Activated CD4-positive, alpha-beta T cell treated with anti-CD3 and anti-CD28 coated beads, Interleukin-2, amount 10 ng/mL, durations not matched to agents 7 days and 5 days (primary cell): ENCODE measurements at regions of chr9 and their contacts with region 1.

Region 1: DNA sequence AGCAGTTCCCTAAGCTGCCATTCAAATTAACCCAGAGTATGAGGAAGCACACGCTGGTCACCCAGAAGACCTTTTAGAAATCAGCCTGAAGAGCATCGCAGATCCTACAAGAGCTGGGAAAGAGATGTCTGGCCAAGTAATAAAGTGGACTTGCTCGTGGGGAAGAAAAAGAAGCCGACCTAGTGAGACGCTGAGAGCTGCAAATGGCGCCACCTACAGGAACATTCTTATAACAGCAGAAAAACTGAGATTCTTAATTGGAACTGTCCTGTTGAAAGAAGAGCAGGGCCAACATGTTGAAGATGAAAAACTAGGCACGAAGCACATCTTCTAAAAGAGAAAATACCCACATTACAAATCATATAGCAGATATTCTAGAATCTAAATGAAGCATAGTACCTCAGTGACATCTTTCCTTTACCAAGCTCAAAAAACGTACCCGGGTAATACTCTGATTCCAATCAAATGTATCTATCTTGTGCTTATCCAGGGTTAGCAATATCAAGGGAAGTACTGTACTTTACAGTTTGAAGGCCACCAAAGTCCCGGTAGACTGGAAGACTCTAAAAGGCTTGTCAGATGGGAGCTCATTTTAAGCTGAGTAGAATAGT is 3.9 kb upstream of the GNAQ start:
- DNase-seq: peak; percentile 71
- H3K4me3 Mint-ChIP-seq: peak overlapping the region; percentile 13
- H3K27ac Mint-ChIP-seq: no peak overlapping the region
- H3K4me1 Mint-ChIP-seq: peaks cover 37% of the 10 kb centered on the region
- H3K27me3 Mint-ChIP-seq: peaks cover 3% of the 10 kb centered on the region

Region 2: DNA sequence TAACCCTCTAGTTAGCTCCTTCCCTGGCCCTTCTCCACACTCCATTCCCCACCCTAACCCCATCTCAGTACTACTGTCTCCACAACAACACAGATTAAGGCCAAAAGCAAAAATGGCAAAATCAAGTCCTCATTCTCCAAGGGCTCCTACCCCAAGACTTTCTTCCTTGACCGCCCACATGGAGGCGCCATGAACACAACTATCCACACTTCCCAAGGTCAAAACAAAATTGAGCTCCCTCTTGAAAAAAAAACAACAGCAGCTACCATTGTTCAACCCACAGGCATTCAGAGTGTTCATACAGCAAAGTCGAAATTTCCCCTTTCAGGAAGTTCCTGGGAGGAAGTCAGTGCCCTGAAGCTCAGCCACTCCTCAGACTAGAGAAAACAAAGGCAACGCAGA is 58.3 kb before region 1 on chr9:
- CTCF ChIA-PET with region 1: interaction called, 23 read pairs
- POLR2A ChIA-PET with region 1: no interaction called
- DNase-seq: peak; percentile 62
- H3K4me3 Mint-ChIP-seq: no peak overlapping the region
- H3K27ac Mint-ChIP-seq: peak overlapping the region; percentile 11
- H3K4me1 Mint-ChIP-seq: peaks cover 53% of the 10 kb centered on the region
- H3K27me3 Mint-ChIP-seq: no peaks in the 10 kb centered on the region

Region 3: GRCh38 chr9:78053627-78054026 is 18.1 kb after region 1 on chr9:
- CTCF ChIA-PET with region 1: interaction called, 20 read pairs
- POLR2A ChIA-PET with region 1: no interaction called
- DNase-seq: no peak
- H3K4me3 Mint-ChIP-seq: peak overlapping the region; percentile 23
- H3K27ac Mint-ChIP-seq: no peak overlapping the region
- H3K4me1 Mint-ChIP-seq: peaks cover 28% of the 10 kb centered on the region
- H3K27me3 Mint-ChIP-seq: peaks cover 23% of the 10 kb centered on the region

Region 4: GRCh38 chr9:78089101-78089500 is 53.6 kb after region 1 on chr9:
- CTCF ChIA-PET with region 1: no interaction called
- POLR2A ChIA-PET with region 1: no interaction called
- DNase-seq: no peak
- H3K4me3 Mint-ChIP-seq: no peak overlapping the region
- H3K27ac Mint-ChIP-seq: no peak overlapping the region
- H3K4me1 Mint-ChIP-seq: no peaks in the 10 kb centered on the region
- H3K27me3 Mint-ChIP-seq: peaks cover 15% of the 10 kb centered on the region

Region 5: GRCh38 chr9:78248635-78249034 is 213.1 kb after region 1 on chr9:
- CTCF ChIA-PET with region 1: no interaction called
- POLR2A ChIA-PET with region 1: no interaction called
- DNase-seq: no peak
- H3K4me3 Mint-ChIP-seq: no peak overlapping the region
- H3K27ac Mint-ChIP-seq: no peak overlapping the region
- H3K4me1 Mint-ChIP-seq: peaks cover 8% of the 10 kb centered on the region
- H3K27me3 Mint-ChIP-seq: no peaks in the 10 kb centered on the region